HEK293T (cell line): ENCODE measurements at regions of chr11 and their contacts with region 1.

Region 1: GRCh38 chr11:125429166-125429707 is 66.8 kb downstream of the FEZ1 start:
- DNase-seq: peak; percentile 72

Region 2: GRCh38 chr11:125123947-125124617 is 305.2 kb before region 1 on chr11:
- CTCF ChIA-PET with region 1: no interaction called
- POLR2A ChIA-PET with region 1: no interaction called
- DNase-seq: peak; percentile 61

Region 3: GRCh38 chr11:125443767-125444311 is 14.6 kb after region 1 on chr11:
- CTCF ChIA-PET with region 1: interaction called, 15 read pairs
- POLR2A ChIA-PET with region 1: no interaction called
- DNase-seq: no peak